Dendritic cell treated with granulocyte-macrophage colony-stimulating factor and Interleukin-4, amounts not matched to agents 40 ng/mL and 50 ng/mL, for 4 days (primary cell): ENCODE measurements at regions of chr9 and their contacts with region 1.

Region 1: DNA sequence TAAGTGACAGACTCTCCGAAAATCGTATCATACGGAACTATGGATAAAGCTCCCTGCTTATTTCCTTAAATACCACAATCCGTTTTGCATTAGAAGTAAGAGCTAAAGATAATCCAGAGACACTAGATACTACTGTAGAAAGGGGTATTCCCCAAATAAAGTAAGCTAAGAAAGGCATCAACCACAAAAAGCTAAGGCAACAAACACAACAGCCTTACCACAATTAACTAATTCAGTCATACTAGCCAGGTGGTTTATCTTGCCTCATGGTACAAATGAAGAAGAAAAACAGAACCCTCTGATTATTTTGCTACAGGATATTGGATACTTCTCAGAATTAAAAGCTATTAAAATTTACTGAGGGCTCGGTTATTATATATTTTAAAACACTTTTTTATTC is 14.1 kb downstream of the ERP44 start:
- H3K4me3 Mint-ChIP-seq: no peak overlapping the region
- H3K27ac Mint-ChIP-seq: no peak overlapping the region
- H3K4me1 Mint-ChIP-seq: peaks cover 61% of the 10 kb centered on the region
- H3K27me3 Mint-ChIP-seq: no peaks in the 10 kb centered on the region

Region 2: DNA sequence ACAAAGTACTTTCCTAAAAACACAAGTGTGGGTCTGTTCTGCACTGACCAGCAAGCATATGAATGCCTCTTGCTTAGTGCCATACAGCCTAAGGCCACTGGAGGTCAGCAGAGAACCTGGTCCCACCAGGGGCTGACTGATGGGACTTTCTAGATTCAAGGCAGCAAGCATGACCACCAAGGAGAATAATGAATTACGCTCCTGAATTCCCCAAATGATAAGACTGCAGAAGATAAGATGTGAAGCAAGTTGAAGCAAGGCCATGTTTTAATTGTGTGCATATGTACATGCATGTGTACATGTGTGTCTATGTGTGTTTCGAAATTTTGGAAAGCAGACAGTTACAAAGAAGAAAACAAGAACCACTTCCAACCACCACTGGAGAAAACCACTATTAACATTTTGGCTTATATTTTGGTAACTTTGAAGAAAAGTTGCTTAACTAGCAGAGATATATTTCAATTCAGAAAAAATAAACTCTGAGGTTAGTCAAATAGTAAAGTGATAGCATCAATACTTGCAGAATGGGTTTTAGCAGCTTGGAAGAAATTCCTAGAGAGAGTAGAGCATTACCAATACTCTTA is 56.4 kb before region 1 on chr9:
- intact Hi-C with region 1: loop called (anchors 10 kb)
- H3K4me3 Mint-ChIP-seq: no peak overlapping the region
- H3K27ac Mint-ChIP-seq: peak overlapping the region; percentile 19
- H3K4me1 Mint-ChIP-seq: peaks cover 36% of the 10 kb centered on the region
- H3K27me3 Mint-ChIP-seq: no peaks in the 10 kb centered on the region